ENCODE measurements at regions of chr12 and their contacts with region 1.

Region 1: DNA sequence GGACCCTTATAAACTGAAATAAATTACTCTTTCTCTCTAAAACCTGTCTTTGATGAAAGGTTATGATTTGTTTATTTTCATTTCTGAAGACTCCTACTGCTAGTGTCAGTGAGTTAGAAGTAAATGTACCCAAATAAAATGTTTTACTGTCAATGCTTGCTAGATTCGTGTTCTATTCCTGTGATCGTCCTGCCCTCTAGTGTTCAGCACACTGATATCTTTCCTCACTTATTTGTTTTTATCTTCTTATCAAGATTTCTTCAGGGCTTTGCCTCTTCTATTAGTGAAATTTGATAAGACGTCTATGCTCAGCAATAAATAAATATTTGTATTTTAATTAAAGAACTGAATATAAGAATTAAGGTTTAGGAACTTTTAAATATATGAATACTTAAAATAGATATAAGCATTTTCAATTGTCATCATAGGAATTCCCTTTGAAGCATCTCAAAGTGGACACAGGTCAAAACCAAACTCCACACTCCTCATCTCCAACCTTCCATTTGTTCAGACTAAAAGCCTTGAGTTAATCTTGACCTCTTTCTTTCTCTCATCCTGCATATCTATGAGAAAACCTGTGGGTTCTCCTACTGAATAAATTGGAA is 75.8 kb downstream of the C12orf50 start:
- ATAC-seq: peak; percentile 48 to 75 (median 56)
- H3K4me3 ChIP-seq: no peak overlapping the region
- H3K27ac ChIP-seq: no peak overlapping the region
- H3K4me1 ChIP-seq: no peaks in the 10 kb centered on the region

Region 2: DNA sequence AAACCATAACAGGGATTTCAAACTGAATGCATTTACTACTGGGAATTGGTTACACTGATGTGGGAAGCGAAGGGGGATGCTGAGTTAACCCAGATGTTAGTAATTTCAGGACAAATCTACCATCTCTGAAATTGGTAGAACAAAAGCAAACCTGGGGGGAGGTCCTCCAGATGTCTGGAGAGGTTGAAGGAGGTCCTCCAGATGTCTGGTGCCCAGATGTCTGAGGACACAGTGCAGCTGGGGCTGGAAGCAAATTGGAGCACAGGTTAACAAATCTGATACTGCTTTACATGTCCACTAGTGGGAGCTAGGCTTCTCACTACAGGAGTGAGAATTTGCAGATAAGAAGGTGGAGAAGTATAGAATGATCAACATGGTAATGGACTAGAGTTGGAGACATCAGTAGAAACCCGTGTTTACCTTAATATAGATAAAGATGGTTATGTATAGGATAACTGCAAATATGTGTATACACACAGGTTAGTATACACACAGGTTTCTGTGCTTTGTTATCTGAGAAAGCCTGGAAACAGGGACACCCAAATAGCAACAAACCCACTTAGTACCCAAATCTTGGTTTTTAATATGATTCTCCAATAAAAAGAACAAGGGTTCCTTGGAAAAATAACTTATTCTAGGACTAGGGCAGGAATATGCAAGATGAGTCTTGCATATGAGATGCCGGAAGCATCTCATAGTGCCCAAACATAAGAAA is 86.6 kb before region 1 on chr12:
- in situ Hi-C with region 1: loop called in 1 of 9 experiments (anchors 10 kb)
- ATAC-seq: peak in 3 of 8 experiments; percentile 68 to 77 (median 73)
- H3K4me3 ChIP-seq: no peak overlapping the region
- H3K27ac ChIP-seq: no peak overlapping the region
- H3K4me1 ChIP-seq: peaks cover 3 to 9% of the 10 kb centered on the region in 2 donors

Measured in motor neuron (in vitro differentiated cells).